ENCODE measurements at regions of chr7 and their contacts with region 1.

Region 1: DNA sequence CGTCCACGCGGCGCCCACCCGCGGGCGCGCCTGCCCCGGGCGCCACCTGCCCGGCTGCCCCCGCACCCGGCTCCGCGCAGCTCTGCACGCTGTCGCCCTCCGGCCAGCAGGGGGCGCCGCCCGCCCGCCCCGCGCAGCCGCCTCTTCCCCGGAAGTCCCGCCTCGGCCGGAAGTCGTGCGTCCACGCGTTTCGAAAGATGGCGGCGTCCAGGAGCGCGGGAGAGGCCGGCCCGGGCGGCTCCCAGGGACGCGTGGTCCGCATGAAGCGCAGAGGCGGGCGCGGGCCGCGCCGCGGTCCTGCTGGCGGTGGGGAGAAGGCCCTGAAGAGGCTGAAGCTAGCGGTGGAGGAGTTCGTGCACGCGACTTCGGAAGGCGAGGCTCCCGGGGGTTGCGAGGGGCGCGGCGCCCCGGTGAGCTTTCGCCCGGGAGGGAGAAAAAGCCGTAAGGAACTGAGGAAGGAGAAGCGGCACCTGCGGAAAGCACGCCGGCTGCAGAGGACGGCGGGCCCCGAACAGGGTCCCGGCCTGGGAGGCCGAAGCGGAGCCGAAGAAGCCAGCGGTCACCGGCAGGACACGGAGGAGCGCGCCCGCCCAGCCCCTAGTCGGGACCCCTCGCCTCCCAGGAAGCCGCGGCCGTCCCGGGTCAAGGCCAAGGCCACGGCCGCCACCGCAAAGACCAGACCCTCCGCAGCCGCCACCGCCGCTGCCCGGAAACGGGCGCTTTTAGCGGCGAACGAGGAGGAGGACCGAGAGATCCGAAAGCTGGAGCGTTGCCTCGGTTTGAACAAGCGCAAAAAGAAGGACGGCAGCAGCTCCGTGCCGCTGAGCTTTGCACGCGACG is at the start of gene NOM1:
- DNase-seq: peak; percentile 93
- H3K4me3 ChIP-seq: peak within 1 kb of the TSS; percentile 82
- H3K27ac ChIP-seq: peak within 1 kb of the TSS; percentile 62
- H3K4me1 ChIP-seq: peaks cover 25% of the 10 kb centered on the region
- CTCF ChIP-seq: peak; percentile 64
- total RNA-seq, gene NOM1: 40.2 and 43.8 TPM in 2 replicates

Region 2: GRCh38 chr7:156827587-156828203 is 122.1 kb before region 1 on chr7:
- CTCF ChIA-PET with region 1: no interaction called
- POLR2A ChIA-PET with region 1: no interaction called
- intact Hi-C with region 1: loop called (anchors 5 kb)
- DNase-seq: peak; percentile 30
- H3K4me3 ChIP-seq: no peak overlapping the region
- H3K27ac ChIP-seq: no peak overlapping the region
- H3K4me1 ChIP-seq: peaks cover 18% of the 10 kb centered on the region
- CTCF ChIP-seq: peak; percentile 76

Region 3: GRCh38 chr7:156892821-156893706 is 56.7 kb before region 1 on chr7 and contains the start of gene LMBR1:
- CTCF ChIA-PET with region 1: no interaction called
- POLR2A ChIA-PET with region 1: interaction called, 17 read pairs
- intact Hi-C with region 1: loop called (anchors 2 kb)
- DNase-seq: peak; percentile 97
- H3K4me3 ChIP-seq: peak within 1 kb of the TSS; percentile 81
- H3K27ac ChIP-seq: peak within 1 kb of the TSS; percentile 82
- H3K4me1 ChIP-seq: peaks cover 30% of the 10 kb centered on the region
- CTCF ChIP-seq: peak; percentile 47
- total RNA-seq, gene LMBR1: 91.1 and 136 TPM in 2 replicates

Region 4: GRCh38 chr7:156907656-156908055 is 42.1 kb before region 1 on chr7:
- CTCF ChIA-PET with region 1: no interaction called
- POLR2A ChIA-PET with region 1: interaction called, 3 read pairs
- intact Hi-C with region 1: loop called (anchors 5 kb)
- DNase-seq: no peak
- H3K4me3 ChIP-seq: no peak overlapping the region
- H3K27ac ChIP-seq: no peak overlapping the region
- H3K4me1 ChIP-seq: no peaks in the 10 kb centered on the region
- CTCF ChIP-seq: no peak

Region 5: DNA sequence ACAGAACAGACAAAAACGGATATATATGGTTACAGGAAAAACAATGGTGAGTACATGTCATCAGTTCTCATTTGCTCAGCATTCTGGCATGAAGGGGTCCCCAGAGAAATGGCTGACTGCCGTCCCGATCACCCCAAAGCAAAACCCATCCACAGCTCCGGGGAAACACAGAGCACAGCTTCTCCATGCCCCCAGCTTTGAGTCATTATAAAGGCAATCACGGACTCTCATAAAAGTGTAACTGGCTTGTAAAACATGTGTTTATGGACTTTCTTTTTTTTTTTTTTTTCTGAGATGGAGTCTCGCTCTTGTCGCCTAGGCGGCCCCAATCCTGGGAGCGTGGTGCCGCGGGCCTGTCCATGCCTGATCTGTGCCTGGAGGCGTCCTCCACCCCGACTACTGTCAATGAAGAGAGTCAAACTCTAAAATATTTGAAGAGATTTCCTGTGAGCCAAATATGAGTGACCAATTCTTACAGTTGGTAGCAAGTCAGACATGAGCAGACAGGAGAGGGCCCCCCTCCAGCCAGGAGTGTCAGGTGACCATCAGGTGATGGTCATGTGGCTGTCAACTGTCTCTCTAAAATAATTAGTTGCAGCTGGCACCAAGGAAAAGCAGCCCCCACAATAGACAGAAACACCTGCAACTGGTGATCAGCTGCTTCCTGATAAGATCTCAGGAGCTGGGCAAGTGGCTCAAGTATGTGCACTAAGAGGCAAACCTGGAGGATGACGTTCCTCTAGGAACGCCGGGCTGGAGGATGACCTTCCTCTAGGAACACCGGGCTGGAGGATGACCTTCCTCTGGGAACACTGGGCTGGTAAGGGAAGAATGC is 22.0 kb before region 1 on chr7:
- CTCF ChIA-PET with region 1: no interaction called
- POLR2A ChIA-PET with region 1: interaction called, 15 read pairs
- intact Hi-C with region 1: loop called (anchors 1 kb)
- DNase-seq: peak; percentile 86
- H3K4me3 ChIP-seq: peak overlapping the region; percentile 21
- H3K27ac ChIP-seq: peak overlapping the region; percentile 74
- H3K4me1 ChIP-seq: peaks cover 56% of the 10 kb centered on the region
- CTCF ChIP-seq: no peak

Region 6: GRCh38 chr7:157080111-157080730 is 130.5 kb after region 1 on chr7:
- CTCF ChIA-PET with region 1: no interaction called
- POLR2A ChIA-PET with region 1: no interaction called
- intact Hi-C with region 1: no loop called
- DNase-seq: no peak
- H3K4me3 ChIP-seq: no peak overlapping the region
- H3K27ac ChIP-seq: no peak overlapping the region
- H3K4me1 ChIP-seq: no peaks in the 10 kb centered on the region
- CTCF ChIP-seq: no peak